ENCODE measurements at regions of chr6 and their contacts with region 1.

Region 1: DNA sequence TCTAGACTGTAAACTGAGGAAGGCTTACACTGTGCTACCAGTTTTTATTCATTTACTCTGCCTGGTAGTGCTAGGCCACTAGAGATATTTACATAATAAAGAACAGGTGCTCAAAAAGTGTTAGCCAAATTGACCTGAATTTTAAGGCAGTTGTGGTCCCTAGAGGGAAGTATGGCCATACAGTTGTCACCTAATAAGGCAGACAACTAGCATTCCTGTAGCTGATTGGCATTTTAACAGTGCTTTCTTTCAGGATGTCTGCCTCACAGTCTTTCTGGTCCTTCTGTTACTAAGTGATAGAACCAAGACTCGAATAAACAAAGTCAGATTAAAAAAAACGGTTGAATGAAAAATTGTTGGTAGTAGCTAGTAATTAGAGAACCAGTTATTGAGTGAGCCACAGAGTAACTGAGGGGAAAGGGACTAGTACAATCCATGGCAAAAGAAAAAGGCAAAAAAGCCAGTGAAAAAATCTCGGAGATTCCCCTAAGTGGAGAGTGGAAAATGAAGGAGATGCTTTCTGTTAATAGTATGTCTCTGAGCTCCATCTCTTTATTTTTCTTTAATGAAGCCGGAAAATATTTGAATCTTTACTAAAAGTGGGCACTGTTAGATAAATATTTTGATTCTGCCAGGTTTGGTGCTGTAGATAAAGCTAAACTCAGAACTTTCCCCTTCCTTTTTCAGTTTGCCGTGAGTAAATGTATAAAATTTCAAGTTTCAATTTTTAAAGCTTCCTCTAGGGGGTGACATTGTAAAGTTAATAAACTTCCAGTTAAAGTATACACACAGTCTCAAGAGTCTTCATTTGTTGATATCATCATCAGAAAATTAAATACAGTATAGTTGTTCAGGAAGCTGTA is 9.1 kb downstream of the VTA1 start:
- DNase-seq: no peak
- ATAC-seq: peak; percentile 71
- H3K4me3 ChIP-seq: no peak overlapping the region
- H3K27ac ChIP-seq: no peak overlapping the region
- H3K4me1 ChIP-seq: no peaks in the 10 kb centered on the region
- H3K27me3 ChIP-seq: no peaks in the 10 kb centered on the region
- CTCF ChIP-seq: peak in 2 of 3 experiments; percentile 6 to 14; a peak in 2 of 6 replicates
- EP300 ChIP-seq: no peak
- POLR2A ChIP-seq: no peak
- RAD21 ChIP-seq: no peak

Region 2: GRCh38 chr6:142195862-142196541 is 39.9 kb after region 1 on chr6:
- CTCF ChIA-PET with region 1: interaction called, 11 read pairs
- POLR2A ChIA-PET with region 1: no interaction called
- RAD21 ChIA-PET with region 1: interaction called, 5 read pairs
- SMC1A ChIA-PET with region 1: interaction called, 5 read pairs
- in situ Hi-C with region 1: no loop called
- intact Hi-C with region 1: no loop called
- DNase-seq: no peak
- ATAC-seq: no peak
- H3K4me3 ChIP-seq: no peak overlapping the region
- H3K27ac ChIP-seq: no peak overlapping the region
- H3K4me1 ChIP-seq: no peaks in the 10 kb centered on the region
- H3K27me3 ChIP-seq: no peaks in the 10 kb centered on the region
- CTCF ChIP-seq: no peak
- EP300 ChIP-seq: no peak
- POLR2A ChIP-seq: no peak
- RAD21 ChIP-seq: no peak

Region 3: GRCh38 chr6:142387997-142388815 is 232.1 kb after region 1 on chr6:
- CTCF ChIA-PET with region 1: interaction called, 10 read pairs
- POLR2A ChIA-PET with region 1: no interaction called
- RAD21 ChIA-PET with region 1: interaction called, 6 read pairs
- SMC1A ChIA-PET with region 1: interaction called, 9 read pairs
- in situ Hi-C with region 1: no loop called
- intact Hi-C with region 1: no loop called
- DNase-seq: no peak
- ATAC-seq: peak; percentile 68
- H3K4me3 ChIP-seq: no peak overlapping the region
- H3K27ac ChIP-seq: no peak overlapping the region
- H3K4me1 ChIP-seq: no peaks in the 10 kb centered on the region
- H3K27me3 ChIP-seq: no peaks in the 10 kb centered on the region; a peak in 1 of 4 replicates
- CTCF ChIP-seq: peak; percentile 44 to 46 (median 45); a peak in 5 of 6 replicates
- EP300 ChIP-seq: no peak
- POLR2A ChIP-seq: no peak
- RAD21 ChIP-seq: peak; percentile 58